Calu3 (cell line): ENCODE measurements at regions of chr16 and their contacts with region 1.

Region 1: DNA sequence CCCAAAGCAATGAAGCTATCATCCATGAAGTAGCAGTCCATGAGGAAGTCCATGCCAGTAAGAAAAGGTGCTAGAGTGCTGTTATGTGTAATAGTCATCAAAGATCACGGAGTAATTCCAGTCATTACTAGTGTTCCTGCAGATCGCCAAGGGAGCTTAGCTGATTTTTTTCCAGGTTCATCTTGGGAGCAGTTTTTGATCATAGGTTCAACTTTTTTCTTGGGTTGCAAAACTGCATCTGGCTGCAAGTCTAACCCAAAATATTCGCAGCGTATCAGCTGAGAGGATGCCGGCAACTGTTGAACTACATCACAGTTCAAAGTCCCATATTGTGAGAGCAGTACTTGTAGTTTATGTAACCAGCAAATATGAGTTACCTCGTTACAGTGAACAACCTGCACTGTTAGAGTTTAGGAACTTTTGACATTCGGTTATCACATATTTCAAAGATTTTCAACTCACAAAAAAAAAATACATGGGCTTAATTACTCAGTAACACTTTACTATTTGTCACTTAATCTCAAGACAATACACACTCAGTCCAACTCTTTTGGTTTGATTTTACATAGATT is 18.4 kb upstream of the RSL1D1 start:
- DNase-seq: no peak
- H3K4me3 Mint-ChIP-seq: no peak overlapping the region
- H3K27ac Mint-ChIP-seq: no peak overlapping the region
- H3K4me1 Mint-ChIP-seq: peaks cover 10% of the 10 kb centered on the region
- H3K27me3 Mint-ChIP-seq: no peaks in the 10 kb centered on the region
- CTCF ChIP-seq: no peak

Region 2: DNA sequence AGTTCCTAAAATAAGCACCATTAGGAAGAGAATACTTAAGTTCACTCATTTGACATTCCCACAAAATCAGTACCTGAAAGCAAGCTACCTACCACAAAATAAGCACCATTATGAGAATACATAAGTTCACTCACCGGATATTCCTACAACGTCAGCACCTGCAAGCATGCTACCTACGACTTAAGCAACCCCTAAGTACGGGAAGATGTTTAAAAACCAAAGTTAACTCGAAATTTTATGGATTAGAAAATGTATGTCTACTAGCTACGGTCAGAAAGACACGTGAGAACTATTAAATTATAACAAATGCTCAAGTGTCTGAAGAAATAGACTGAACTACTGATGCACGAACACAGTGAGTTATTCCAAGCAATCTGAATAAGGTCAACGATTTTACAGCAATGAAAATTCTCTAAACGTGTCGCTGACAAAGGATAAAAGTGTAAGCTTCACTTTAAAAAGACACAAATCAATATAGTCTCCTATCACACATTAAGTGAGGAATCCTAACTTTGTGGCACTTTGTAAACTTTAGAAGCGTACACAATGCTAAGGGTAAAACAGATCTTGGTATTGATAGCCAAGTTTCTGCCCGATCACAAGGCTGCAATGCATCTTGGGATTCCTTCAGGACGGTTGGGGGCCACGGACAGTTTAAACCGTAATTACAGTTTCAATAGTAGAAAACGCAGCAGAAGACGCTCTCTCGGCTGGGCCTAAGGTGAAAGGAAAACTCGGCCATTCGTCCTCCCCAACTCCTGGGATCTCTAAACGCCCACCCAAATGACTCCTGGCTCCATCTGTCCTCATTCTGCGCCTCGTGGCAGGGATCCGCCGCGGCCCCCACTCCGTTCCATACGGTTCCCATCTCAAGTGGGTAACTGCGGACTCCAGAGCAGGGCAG is 44.7 kb after region 1 on chr16:
- CTCF ChIA-PET with region 1: interaction called, 6 read pairs
- intact Hi-C with region 1: loop called (anchors 5 kb)
- DNase-seq: peak; percentile 24
- H3K4me3 Mint-ChIP-seq: peak overlapping the region; percentile 81
- H3K27ac Mint-ChIP-seq: peak overlapping the region; percentile 76
- H3K4me1 Mint-ChIP-seq: peaks cover 41% of the 10 kb centered on the region
- H3K27me3 Mint-ChIP-seq: no peaks in the 10 kb centered on the region
- CTCF ChIP-seq: no peak

Region 3: GRCh38 chr16:12245088-12245920 is 375.6 kb after region 1 on chr16:
- CTCF ChIA-PET with region 1: no interaction called
- intact Hi-C with region 1: no loop called
- DNase-seq: no peak
- H3K4me3 Mint-ChIP-seq: no peak overlapping the region
- H3K27ac Mint-ChIP-seq: no peak overlapping the region
- H3K4me1 Mint-ChIP-seq: no peaks in the 10 kb centered on the region
- H3K27me3 Mint-ChIP-seq: no peaks in the 10 kb centered on the region
- CTCF ChIP-seq: no peak

Region 4: GRCh38 chr16:13193721-13194120 is 1324.0 kb after region 1 on chr16:
- CTCF ChIA-PET with region 1: no interaction called
- intact Hi-C with region 1: no loop called
- DNase-seq: no peak
- H3K4me3 Mint-ChIP-seq: no peak overlapping the region
- H3K27ac Mint-ChIP-seq: no peak overlapping the region
- H3K4me1 Mint-ChIP-seq: no peaks in the 10 kb centered on the region
- H3K27me3 Mint-ChIP-seq: no peaks in the 10 kb centered on the region
- CTCF ChIP-seq: no peak